ENCODE measurements at regions of chr22 and their contacts with region 1.

Region 1: GRCh38 chr22:29245637-29246385 is 22.0 kb downstream of the RHBDD3 start:
- DNase-seq: peak; percentile 55 to 60
- ATAC-seq: peak; percentile 91 to 98
- H3K4me3 ChIP-seq: no peak overlapping the region
- H3K27ac ChIP-seq: no peak overlapping the region
- H3K4me1 ChIP-seq: no peaks in the 10 kb centered on the region
- CTCF ChIP-seq: peak; percentile 68
- EP300 ChIP-seq: no peak
- POLR2A ChIP-seq: no peak
- RAD21 ChIP-seq: peak; percentile 79 to 88

Region 2: DNA sequence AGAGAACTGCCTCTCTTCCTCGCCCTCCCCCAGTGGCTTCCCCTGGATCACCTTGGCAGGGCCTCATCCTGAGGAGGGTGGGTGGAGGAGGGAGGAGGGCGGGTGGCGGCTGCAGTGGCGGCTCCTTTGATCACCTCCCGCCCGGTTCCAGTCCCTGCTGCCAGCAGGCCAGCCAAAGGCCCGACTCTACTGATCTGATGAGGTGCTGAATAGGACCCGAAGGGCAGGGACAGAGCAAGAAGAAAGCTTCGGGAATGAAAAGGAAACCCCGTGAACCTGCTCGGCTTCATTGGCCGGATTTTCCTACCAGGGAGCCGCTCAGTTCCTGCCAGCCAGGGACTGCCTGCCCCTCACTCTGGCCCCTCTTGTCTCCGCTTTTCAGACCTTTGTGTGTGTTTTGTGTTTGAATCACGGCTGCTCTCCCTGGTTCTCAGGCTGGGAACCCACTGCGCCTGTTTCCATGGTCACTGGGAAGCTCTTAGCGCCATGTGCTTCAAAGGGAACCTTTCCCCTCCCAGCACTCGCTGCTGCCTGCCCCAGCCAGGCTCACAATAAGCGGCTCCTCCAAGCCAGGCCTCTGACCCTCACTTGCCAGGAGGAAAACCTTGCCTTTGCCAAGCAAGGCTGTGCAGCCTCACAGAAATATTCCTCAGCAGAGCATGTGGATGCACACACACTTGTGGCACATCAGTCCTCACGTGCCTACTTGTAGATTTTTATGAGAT is 241.0 kb before region 1 on chr22:
- CTCF ChIA-PET with region 1: no interaction called
- POLR2A ChIA-PET with region 1: no interaction called
- DNase-seq: no peak
- ATAC-seq: no peak
- H3K4me3 ChIP-seq: no peak overlapping the region
- H3K27ac ChIP-seq: peak overlapping the region in 1 of 2 experiments; percentile 48; a peak in 3 of 6 replicates
- H3K4me1 ChIP-seq: peaks cover 25% of the 10 kb centered on the region
- CTCF ChIP-seq: no peak
- EP300 ChIP-seq: no peak
- POLR2A ChIP-seq: no peak
- RAD21 ChIP-seq: no peak

Region 3: GRCh38 chr22:29040385-29041275 is 205.2 kb before region 1 on chr22:
- CTCF ChIA-PET with region 1: interaction called, 15 read pairs
- POLR2A ChIA-PET with region 1: no interaction called
- DNase-seq: peak in 1 of 2 experiments; percentile 77
- ATAC-seq: peak; percentile 90 to 92
- H3K4me3 ChIP-seq: no peak overlapping the region
- H3K27ac ChIP-seq: peak overlapping the region; percentile 70 to 87
- H3K4me1 ChIP-seq: peaks cover 63% of the 10 kb centered on the region
- CTCF ChIP-seq: peak; percentile 90
- EP300 ChIP-seq: no peak
- POLR2A ChIP-seq: no peak
- RAD21 ChIP-seq: peak; percentile 91 to 95

Region 4: DNA sequence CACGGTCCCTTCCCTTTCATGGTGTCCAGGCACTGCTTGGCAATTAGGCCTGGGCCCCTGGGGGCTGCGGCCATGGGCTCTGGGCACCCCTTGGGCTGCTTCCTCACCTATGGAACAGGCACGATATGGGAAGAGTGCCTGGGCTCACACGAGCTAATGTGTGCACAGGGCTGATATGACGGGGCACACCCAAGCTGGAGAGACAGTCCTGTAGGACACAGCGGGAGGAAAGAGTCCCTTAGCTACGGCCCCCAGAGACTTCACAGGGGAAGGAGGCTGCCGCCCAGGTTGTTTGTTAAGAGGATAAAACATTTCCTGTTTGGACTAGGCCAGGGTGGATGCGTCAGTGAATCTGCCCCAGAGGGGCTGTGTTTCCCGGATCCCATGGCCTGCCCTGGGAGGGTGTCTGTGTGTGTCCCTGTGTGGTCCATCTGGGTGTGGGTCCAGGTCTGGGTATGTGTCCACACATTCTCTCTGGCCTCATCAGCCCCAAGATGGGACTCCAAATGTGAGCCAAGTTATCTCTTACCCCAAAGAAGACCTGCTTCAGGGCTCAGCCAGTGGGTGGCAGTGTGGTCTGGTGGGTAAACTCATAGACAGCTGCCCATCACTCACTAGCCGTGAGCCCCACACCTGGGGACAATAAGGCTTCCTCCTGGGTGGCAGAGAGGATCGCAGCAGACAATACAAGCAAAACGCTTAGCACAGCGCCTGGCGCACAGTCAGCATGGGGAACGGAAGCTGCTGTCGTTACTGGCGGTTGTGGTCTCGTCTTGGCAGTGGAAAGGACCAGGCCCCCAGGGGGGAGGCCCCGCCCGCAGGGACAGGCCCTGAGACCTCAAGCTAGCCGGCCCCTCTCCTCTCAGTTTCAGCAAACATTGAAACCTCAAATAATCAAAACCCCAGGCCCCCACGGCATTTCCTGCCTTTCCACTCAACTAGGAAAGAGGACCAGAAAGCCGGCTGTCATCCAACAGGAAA is 43.3 kb before region 1 on chr22:
- CTCF ChIA-PET with region 1: interaction called, 36 read pairs
- POLR2A ChIA-PET with region 1: no interaction called
- DNase-seq: peak; percentile 18 to 24
- ATAC-seq: peak in 1 of 2 experiments; percentile 68; a peak in 3 of 6 replicates
- H3K4me3 ChIP-seq: no peak overlapping the region
- H3K27ac ChIP-seq: no peak overlapping the region
- H3K4me1 ChIP-seq: no peaks in the 10 kb centered on the region
- CTCF ChIP-seq: peak; percentile 35
- EP300 ChIP-seq: no peak
- POLR2A ChIP-seq: no peak
- RAD21 ChIP-seq: peak; percentile 23 to 39; a peak in 1 of 5 replicates

Region 5: DNA sequence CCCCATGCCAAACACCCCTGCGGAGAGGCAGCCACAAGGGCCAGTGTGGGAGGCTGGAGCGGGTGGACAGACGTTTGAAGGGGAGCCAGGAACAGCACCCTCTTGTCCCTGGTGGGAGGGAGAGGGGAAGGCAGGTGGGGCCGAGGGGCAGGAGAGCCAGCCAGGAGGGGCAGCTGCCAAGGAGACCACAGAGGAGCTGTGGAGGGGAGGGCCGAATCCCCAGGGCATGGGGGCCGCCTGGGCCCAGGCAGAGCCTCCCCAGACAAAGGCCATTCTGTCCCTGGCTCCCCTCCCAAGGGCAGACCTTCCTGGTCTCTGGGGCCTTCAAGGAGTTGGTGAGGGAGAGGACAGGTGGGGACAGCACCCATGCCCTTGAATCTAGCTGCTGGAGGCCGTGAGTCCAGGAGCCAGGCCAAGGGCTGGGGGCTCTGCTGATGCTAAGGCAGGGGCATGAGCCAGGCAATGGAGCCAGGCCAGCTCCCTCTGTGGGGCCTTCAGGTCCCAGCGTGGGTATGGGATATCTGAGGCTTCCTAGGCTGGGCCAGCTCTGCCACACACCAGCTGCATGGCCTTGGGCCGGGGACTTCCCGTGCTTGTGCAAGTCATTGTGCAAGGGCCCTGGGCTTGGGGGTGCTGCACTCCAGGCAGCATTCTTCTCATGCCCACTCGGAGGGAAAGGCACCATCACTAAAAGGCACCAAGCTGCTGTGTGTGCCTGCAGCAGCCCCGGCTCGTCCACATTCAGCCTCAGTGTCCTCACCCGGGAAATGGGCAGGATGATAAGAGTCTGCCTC is 28.7 kb before region 1 on chr22:
- CTCF ChIA-PET with region 1: interaction called, 15 read pairs
- POLR2A ChIA-PET with region 1: no interaction called
- DNase-seq: peak in 1 of 2 experiments; percentile 15
- ATAC-seq: peak in 1 of 2 experiments; percentile 52; a peak in 3 of 6 replicates
- H3K4me3 ChIP-seq: no peak overlapping the region
- H3K27ac ChIP-seq: 0 out of 6 replicates have a peak overlapping the region, but pooled peaks of 1 of the 2 experiments have one; percentile 28
- H3K4me1 ChIP-seq: peaks cover 9% of the 10 kb centered on the region
- CTCF ChIP-seq: no peak
- EP300 ChIP-seq: no peak
- POLR2A ChIP-seq: no peak
- RAD21 ChIP-seq: no peak

Region 6: GRCh38 chr22:29226351-29226981 is 19.3 kb before region 1 on chr22:
- CTCF ChIA-PET with region 1: interaction called, 26 read pairs
- POLR2A ChIA-PET with region 1: no interaction called
- DNase-seq: no peak
- ATAC-seq: no peak
- H3K4me3 ChIP-seq: no peak overlapping the region
- H3K27ac ChIP-seq: no peak overlapping the region
- H3K4me1 ChIP-seq: no peaks in the 10 kb centered on the region
- CTCF ChIP-seq: no peak
- EP300 ChIP-seq: no peak
- POLR2A ChIP-seq: no peak
- RAD21 ChIP-seq: no peak

Region 7: GRCh38 chr22:29231971-29232959 is 13.5 kb before region 1 on chr22:
- CTCF ChIA-PET with region 1: interaction called, 35 read pairs
- POLR2A ChIA-PET with region 1: interaction called, 3 read pairs
- DNase-seq: no peak
- ATAC-seq: no peak
- H3K4me3 ChIP-seq: no peak overlapping the region
- H3K27ac ChIP-seq: no peak overlapping the region
- H3K4me1 ChIP-seq: no peaks in the 10 kb centered on the region
- CTCF ChIP-seq: no peak
- EP300 ChIP-seq: no peak
- POLR2A ChIP-seq: no peak
- RAD21 ChIP-seq: no peak

Region 8: GRCh38 chr22:29260601-29261315 is 14.9 kb after region 1 on chr22:
- CTCF ChIA-PET with region 1: interaction called, 42 read pairs
- POLR2A ChIA-PET with region 1: no interaction called
- DNase-seq: no peak
- ATAC-seq: peak in 1 of 2 experiments; percentile 14; a peak in 3 of 6 replicates
- H3K4me3 ChIP-seq: no peak overlapping the region
- H3K27ac ChIP-seq: no peak overlapping the region
- H3K4me1 ChIP-seq: no peaks in the 10 kb centered on the region; the same call in 2 of the 3 replicates
- CTCF ChIP-seq: no peak
- EP300 ChIP-seq: no peak
- POLR2A ChIP-seq: no peak
- RAD21 ChIP-seq: no peak

Measured in A549 (cell line).